Natural killer cell (primary cell): ENCODE measurements at regions of chr4 and their contacts with region 1.

Region 1: DNA sequence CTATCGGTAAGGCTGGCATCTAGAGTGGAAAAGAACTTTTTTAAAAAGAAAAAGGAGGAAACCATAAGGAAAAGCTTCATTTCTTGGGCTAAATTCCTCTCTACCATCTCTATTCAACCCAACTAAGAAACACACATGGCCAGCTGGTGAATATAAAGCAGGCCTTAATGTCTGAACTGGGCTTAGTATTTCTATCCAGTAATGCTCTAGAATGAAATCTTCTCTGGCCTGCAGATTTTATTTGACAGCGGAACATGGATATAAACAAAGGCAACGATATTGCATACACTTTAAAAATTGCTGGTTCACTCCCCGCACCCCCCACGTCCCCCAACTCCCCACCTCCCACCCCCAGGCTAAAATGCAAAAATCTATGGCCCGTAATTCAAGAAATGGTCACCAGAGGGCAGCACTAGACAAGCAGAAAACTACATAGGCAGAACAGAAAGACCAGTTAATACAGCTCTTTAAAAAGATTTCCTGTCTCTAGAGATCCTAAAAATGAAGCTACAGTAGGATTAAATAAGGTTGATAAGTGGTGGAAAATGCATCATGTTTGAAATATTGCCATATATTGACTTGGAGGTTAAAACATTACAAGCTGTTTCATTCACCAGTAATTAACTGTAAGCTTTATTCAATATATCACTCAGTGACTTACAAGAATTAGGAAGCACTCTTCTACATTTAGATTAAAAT is 155.2 kb upstream of the GALNT7 start:
- DNase-seq: peak; percentile 27 to 71
- ATAC-seq: peak; percentile 63 to 71 (median 69)
- H3K4me3 ChIP-seq: no peak overlapping the region
- H3K4me3 Mint-ChIP-seq: no peak overlapping the region
- H3K27ac ChIP-seq: no peak overlapping the region
- H3K27ac Mint-ChIP-seq: no peak overlapping the region
- H3K4me1 ChIP-seq: no peaks in the 10 kb centered on the region
- H3K4me1 Mint-ChIP-seq: no peaks in the 10 kb centered on the region
- H3K27me3 ChIP-seq: no peaks in the 10 kb centered on the region
- H3K27me3 Mint-ChIP-seq: no peaks in the 10 kb centered on the region
- CTCF ChIP-seq: peak; percentile 73

Region 2: DNA sequence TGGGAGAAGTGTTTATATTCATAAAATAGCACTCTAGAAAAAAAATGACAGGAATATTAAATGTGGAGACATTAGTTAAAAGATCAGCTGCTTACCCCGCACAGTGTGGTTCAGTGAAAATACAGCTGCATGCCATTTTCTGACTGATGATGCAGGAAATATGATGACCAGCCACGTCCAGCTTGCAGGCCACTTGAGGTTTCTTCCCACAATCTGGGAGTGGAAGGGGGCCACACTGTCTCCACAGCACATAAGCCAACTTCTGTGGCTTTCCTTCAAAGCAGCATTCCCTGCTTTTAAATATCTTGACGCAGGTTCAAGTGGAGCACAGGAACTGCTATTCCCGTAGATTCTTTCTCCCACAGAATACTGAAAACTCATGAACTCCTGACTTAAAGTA is 18.2 kb before region 1 on chr4:
- intact Hi-C with region 1: no loop called
- DNase-seq: no peak
- ATAC-seq: no peak
- H3K4me3 ChIP-seq: no peak overlapping the region
- H3K4me3 Mint-ChIP-seq: no peak overlapping the region
- H3K27ac ChIP-seq: no peak overlapping the region
- H3K27ac Mint-ChIP-seq: no peak overlapping the region
- H3K4me1 ChIP-seq: no peaks in the 10 kb centered on the region
- H3K4me1 Mint-ChIP-seq: no peaks in the 10 kb centered on the region
- H3K27me3 ChIP-seq: no peaks in the 10 kb centered on the region
- H3K27me3 Mint-ChIP-seq: no peaks in the 10 kb centered on the region
- CTCF ChIP-seq: no peak

Region 3: DNA sequence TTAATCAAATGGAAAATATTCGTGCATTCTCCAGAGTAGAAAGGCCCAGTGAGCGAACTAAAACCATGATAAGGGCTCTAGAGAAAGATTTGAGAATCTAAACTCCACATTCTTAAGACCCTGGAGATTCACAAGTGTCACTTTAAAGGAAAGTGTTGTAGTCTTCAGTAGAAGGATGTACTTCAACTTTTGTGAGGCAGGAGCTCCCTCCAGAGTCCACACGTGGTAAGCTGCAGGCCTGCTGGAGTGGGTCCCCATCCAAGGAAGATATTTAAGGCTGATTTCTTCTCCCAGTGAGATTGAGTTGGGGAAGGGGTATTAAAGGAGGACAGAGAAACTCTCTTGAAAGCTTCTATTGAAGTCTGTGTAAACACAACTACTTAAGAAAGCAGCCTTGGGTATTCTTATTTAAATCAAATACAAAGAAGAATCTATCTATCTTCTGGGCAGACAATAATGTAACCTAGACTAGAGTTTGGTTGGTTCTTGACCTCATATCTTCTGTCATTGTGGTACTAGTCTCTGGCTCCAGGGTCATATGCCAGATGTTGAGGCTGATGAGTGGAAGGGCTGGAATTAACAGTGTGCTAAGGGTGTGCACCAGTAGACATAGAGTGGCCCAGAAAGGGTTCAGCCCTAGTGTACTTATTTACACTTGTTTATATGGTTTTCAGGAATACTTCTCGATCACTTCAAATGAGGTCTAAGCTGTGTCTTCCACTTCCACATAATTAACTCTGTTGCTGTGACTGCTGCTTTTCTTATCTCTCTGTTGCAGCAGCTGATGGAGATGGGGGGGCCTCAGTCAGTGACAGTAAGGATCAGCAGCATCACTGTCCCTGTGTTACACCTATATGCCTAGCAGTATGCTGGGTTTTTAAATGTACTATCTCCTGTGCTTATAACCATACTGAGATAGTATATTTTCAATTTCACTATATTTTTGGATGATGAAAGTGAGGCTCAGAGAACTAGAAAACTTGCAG is 244.6 kb after region 1 on chr4:
- intact Hi-C with region 1: loop called (anchors 1 kb)
- DNase-seq: peak in 1 of 2 donors; percentile 76
- ATAC-seq: peak; percentile 65 to 84 (median 68)
- H3K4me3 ChIP-seq: no peak overlapping the region
- H3K4me3 Mint-ChIP-seq: no peak overlapping the region
- H3K27ac ChIP-seq: no peak overlapping the region
- H3K27ac Mint-ChIP-seq: no peak overlapping the region
- H3K4me1 ChIP-seq: no peaks in the 10 kb centered on the region
- H3K4me1 Mint-ChIP-seq: peaks cover 11 to 15% of the 10 kb centered on the region in 2 donors
- H3K27me3 ChIP-seq: no peaks in the 10 kb centered on the region
- H3K27me3 Mint-ChIP-seq: no peaks in the 10 kb centered on the region
- CTCF ChIP-seq: peak; percentile 57

Region 4: DNA sequence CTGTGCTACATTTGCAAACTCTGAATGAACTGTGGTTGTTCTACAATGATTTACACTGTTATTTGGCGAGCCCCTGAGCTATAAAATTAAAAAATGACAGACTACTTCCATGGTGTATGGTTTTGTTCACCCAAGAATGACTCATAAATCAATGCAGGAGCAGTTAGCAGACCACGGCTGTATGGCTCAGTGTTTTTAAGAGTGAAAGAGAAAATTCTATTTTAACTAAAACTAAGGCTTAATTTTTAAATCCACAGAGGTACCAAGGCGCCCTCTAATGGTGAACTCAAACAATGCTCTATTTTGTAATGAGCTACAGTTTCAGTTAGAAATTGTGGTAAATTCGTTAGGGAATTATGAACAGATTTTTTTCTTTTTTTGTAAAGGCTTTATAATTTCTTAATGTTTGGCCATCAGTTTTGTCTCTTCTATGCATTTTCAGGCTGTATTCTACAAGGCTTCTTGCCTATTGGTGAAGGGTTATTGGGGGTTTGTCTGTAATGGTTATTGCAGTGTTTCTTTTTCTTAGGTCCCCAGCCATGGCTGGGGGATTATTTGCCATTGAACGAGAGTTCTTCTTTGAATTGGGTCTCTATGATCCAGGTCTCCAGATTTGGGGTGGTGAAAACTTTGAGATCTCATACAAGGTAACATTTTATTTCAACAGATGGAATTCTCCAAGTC is 288.3 kb after region 1 on chr4:
- intact Hi-C with region 1: loop called (anchors 1 kb)
- DNase-seq: peak in 1 of 2 donors; percentile 58
- ATAC-seq: peak in 1 of 3 donors; percentile 48
- H3K4me3 ChIP-seq: no peak overlapping the region
- H3K4me3 Mint-ChIP-seq: no peak overlapping the region
- H3K27ac ChIP-seq: no peak overlapping the region
- H3K27ac Mint-ChIP-seq: no peak overlapping the region
- H3K4me1 ChIP-seq: no peaks in the 10 kb centered on the region
- H3K4me1 Mint-ChIP-seq: peaks cover 6% of the 10 kb centered on the region in 2 donors
- H3K27me3 ChIP-seq: no peaks in the 10 kb centered on the region
- H3K27me3 Mint-ChIP-seq: no peaks in the 10 kb centered on the region
- CTCF ChIP-seq: peak; percentile 81